A673 (cell line): ENCODE measurements at regions of chr12 and their contacts with region 1.

Region 1: GRCh38 chr12:4833524-4833923 is 76.2 kb upstream of the KCNA1 start:
- DNase-seq: no peak
- H3K4me3 ChIP-seq: no peak overlapping the region
- H3K27ac ChIP-seq: no peak overlapping the region
- H3K4me1 ChIP-seq: no peaks in the 10 kb centered on the region
- H3K27me3 ChIP-seq: peaks cover 49% of the 10 kb centered on the region
- CTCF ChIP-seq: no peak

Region 2: GRCh38 chr12:4819654-4820053 is 13.9 kb before region 1 on chr12:
- CTCF ChIA-PET with region 1: no interaction called
- POLR2A ChIA-PET with region 1: no interaction called
- intact Hi-C with region 1: loop called (anchors 2 kb)
- DNase-seq: no peak
- H3K4me3 ChIP-seq: no peak overlapping the region
- H3K27ac ChIP-seq: no peak overlapping the region
- H3K4me1 ChIP-seq: no peaks in the 10 kb centered on the region
- H3K27me3 ChIP-seq: peaks cover 77% of the 10 kb centered on the region
- CTCF ChIP-seq: no peak